Activated T-helper 2 cell treated with anti-CD3 and anti-CD28 coated beads, Interferon-gamma antibody, Interleukin-2, Interleukin-4, amounts not matched to agents 10 μg/mL and 5 μg/mL and 100 μg/mL, durations not matched to agents 14 hours and 24 hours and 36 hours (primary cell): ENCODE measurements at regions of chr1 and their contacts with region 1.

Region 1: GRCh38 chr1:226736908-226737818 is 1.9 kb downstream of the ITPKB start:
- DNase-seq: peak; percentile 47
- H3K4me3 Mint-ChIP-seq: peak overlapping the region; percentile 93
- H3K27ac Mint-ChIP-seq: peak overlapping the region; percentile 69
- H3K4me1 Mint-ChIP-seq: peaks cover 53% of the 10 kb centered on the region
- H3K27me3 Mint-ChIP-seq: no peaks in the 10 kb centered on the region

Region 2: DNA sequence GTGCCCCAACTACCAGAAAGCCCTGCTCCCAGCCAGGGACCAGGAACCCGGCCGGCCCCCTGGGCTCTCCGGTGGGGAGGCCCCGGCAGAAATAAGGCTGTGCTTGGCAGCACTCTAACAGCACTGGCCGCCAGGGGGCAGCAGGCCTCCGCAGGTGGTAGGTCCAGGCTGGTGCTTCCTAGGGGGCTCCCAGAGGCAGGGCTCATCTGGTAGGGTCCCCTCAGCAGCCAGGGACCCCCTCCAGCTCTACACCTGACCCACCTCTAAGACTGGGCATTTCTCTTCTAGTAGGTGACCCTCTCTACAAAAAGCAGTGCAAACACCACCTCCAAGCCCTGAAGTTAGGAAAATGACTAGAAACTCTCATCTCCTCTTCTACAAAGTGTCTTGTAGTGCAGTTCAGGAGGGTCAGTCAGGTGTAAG is 103.0 kb before region 1 on chr1:
- intact Hi-C with region 1: loop called (anchors 2 kb)
- DNase-seq: peak; percentile 66
- H3K4me3 Mint-ChIP-seq: no peak overlapping the region
- H3K27ac Mint-ChIP-seq: no peak overlapping the region
- H3K4me1 Mint-ChIP-seq: peaks cover 37% of the 10 kb centered on the region
- H3K27me3 Mint-ChIP-seq: no peaks in the 10 kb centered on the region

Region 3: GRCh38 chr1:226679853-226680516 is 57.2 kb before region 1 on chr1:
- intact Hi-C with region 1: loop called (anchors 1 kb)
- DNase-seq: peak; percentile 68
- H3K4me3 Mint-ChIP-seq: peak overlapping the region; percentile 79
- H3K27ac Mint-ChIP-seq: peak overlapping the region; percentile 95
- H3K4me1 Mint-ChIP-seq: peaks cover 88% of the 10 kb centered on the region
- H3K27me3 Mint-ChIP-seq: no peaks in the 10 kb centered on the region

Region 4: GRCh38 chr1:226711976-226712741 is 25.0 kb before region 1 on chr1:
- intact Hi-C with region 1: loop called (anchors 1 kb)
- DNase-seq: peak; percentile 62
- H3K4me3 Mint-ChIP-seq: peak overlapping the region; percentile 47
- H3K27ac Mint-ChIP-seq: peak overlapping the region; percentile 67
- H3K4me1 Mint-ChIP-seq: peaks cover 80% of the 10 kb centered on the region
- H3K27me3 Mint-ChIP-seq: no peaks in the 10 kb centered on the region

Region 5: GRCh38 chr1:226798427-226799411 is 61.6 kb after region 1 on chr1:
- intact Hi-C with region 1: loop called (anchors 1 kb)
- DNase-seq: peak; percentile 67
- H3K4me3 Mint-ChIP-seq: peak overlapping the region; percentile 32
- H3K27ac Mint-ChIP-seq: peak overlapping the region; percentile 77
- H3K4me1 Mint-ChIP-seq: peaks cover 33% of the 10 kb centered on the region
- H3K27me3 Mint-ChIP-seq: peaks cover 38% of the 10 kb centered on the region

Region 6: DNA sequence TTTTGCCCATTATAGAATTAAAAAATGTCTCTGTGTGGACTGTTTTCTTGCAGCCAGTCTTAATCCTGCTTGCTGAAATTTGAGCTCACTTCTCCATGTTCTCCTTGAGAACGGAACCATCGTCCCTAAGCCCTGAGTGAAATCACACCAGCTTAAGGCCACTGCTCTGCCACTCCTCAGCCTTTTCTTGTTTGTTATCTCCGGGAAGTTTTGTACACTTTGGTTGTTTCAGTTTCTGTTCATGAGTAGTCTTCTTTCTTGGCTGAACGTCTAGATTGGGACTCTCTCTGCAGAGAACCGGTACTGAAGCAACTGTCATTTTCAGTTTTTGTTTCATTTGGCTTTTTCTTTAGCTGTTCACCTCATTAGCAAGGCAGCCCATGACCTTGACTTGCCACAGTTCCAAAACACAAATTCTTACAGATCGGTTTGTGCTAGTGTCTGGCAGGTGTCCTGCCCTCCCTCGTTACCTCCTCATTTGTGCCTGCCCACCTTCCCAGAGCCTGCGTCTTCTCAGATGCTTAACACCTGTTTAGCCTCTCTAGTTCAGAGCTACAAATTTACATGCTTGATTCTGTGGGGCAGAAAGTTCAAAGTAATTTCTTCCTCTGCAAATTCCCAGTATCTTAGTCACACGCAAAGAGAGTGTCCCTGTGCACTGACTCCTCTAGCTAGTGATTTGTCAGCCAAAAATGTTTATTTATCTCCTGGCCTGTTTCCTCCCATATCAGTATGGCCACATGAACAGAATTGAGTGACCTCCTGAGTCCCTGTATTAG is 145.7 kb after region 1 on chr1:
- intact Hi-C with region 1: loop called (anchors 5 kb)
- DNase-seq: peak; percentile 39
- H3K4me3 Mint-ChIP-seq: peak overlapping the region; percentile 74
- H3K27ac Mint-ChIP-seq: peak overlapping the region; percentile 96
- H3K4me1 Mint-ChIP-seq: peaks cover 57% of the 10 kb centered on the region
- H3K27me3 Mint-ChIP-seq: no peaks in the 10 kb centered on the region